ENCODE measurements at regions of chr12 and their contacts with region 1.

Region 1: DNA sequence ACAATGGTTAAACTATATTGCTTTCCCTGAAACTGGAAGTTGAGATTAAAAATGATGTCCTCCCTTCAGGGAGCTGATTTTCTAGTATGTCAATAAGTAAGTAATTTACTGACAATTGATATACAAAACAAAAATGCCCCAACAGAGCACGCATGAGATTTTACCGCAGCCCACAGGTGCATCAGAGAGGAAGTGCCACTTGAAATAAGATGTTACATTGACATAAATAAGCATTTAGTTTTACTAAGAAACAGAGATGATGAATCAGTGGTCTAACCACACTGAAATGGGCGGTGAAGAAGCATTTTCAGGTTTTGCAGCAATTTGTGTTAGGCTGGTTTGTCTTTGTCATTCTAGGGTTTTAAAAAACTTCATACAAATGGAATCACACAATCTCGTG is 8.8 kb upstream of the CLECL1 start:
- DNase-seq: peak; percentile 38 to 94 (median 64)
- ATAC-seq: peak; percentile 65
- H3K4me3 ChIP-seq: no peak overlapping the region
- H3K4me3 Mint-ChIP-seq: peak overlapping the region; percentile 78
- H3K27ac ChIP-seq: peak overlapping the region; percentile 46 to 75
- H3K27ac Mint-ChIP-seq: peak overlapping the region; percentile 91
- H3K4me1 ChIP-seq: peaks cover 37% of the 10 kb centered on the region
- H3K4me1 Mint-ChIP-seq: peaks cover 70% of the 10 kb centered on the region
- H3K27me3 ChIP-seq: no peaks in the 10 kb centered on the region
- H3K27me3 Mint-ChIP-seq: no peaks in the 10 kb centered on the region
- CTCF ChIP-seq: no peak

Region 2: DNA sequence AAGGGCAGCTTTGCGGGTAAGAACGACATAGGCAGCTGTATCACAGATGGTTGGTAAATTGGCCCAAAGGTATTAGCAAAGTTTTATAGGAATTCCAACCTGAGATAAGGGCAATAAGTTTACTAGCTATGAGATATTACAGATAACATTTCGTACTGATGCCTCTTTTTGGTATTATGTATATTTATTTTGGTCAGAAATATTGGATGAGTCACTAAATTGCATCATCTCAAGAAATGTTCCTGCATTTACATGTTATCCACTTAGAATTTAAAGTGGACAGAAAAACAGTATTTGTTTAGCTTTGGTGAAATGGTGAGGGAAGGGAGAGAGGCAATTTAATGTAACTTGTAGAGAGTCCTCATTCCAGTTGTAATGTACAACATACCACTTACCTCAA is 468.4 kb before region 1 on chr12:
- CTCF ChIA-PET with region 1: no interaction called
- POLR2A ChIA-PET with region 1: no interaction called
- intact Hi-C with region 1: no loop called
- DNase-seq: no peak
- ATAC-seq: no peak
- H3K4me3 ChIP-seq: no peak overlapping the region
- H3K4me3 Mint-ChIP-seq: no peak overlapping the region
- H3K27ac ChIP-seq: no peak overlapping the region
- H3K27ac Mint-ChIP-seq: no peak overlapping the region
- H3K4me1 ChIP-seq: no peaks in the 10 kb centered on the region
- H3K4me1 Mint-ChIP-seq: no peaks in the 10 kb centered on the region
- H3K27me3 ChIP-seq: no peaks in the 10 kb centered on the region
- H3K27me3 Mint-ChIP-seq: peaks cover 14% of the 10 kb centered on the region
- CTCF ChIP-seq: no peak

Region 3: GRCh38 chr12:9615420-9616136 is 126.1 kb before region 1 on chr12:
- CTCF ChIA-PET with region 1: interaction called, 7 read pairs
- POLR2A ChIA-PET with region 1: interaction called, 16 read pairs
- intact Hi-C with region 1: no loop called
- DNase-seq: peak in 3 of 14 experiments; percentile 69 to 86 (median 72)
- ATAC-seq: peak; percentile 94
- H3K4me3 ChIP-seq: peak overlapping the region; percentile 39
- H3K4me3 Mint-ChIP-seq: peak overlapping the region; percentile 69
- H3K27ac ChIP-seq: peak overlapping the region; percentile 43 to 89
- H3K27ac Mint-ChIP-seq: peak overlapping the region; percentile 97
- H3K4me1 ChIP-seq: peaks cover 24% of the 10 kb centered on the region
- H3K4me1 Mint-ChIP-seq: peaks cover 90% of the 10 kb centered on the region
- H3K27me3 ChIP-seq: no peaks in the 10 kb centered on the region
- H3K27me3 Mint-ChIP-seq: no peaks in the 10 kb centered on the region
- CTCF ChIP-seq: no peak

Region 4: GRCh38 chr12:9702255-9702654 is 39.5 kb before region 1 on chr12:
- CTCF ChIA-PET with region 1: interaction called, 4 read pairs
- POLR2A ChIA-PET with region 1: interaction called, 52 read pairs
- intact Hi-C with region 1: no loop called
- DNase-seq: peak in 12 of 14 experiments; percentile 28 to 89 (median 50)
- ATAC-seq: peak; percentile 71
- H3K4me3 ChIP-seq: peak overlapping the region; percentile 27
- H3K4me3 Mint-ChIP-seq: peak overlapping the region; percentile 69
- H3K27ac ChIP-seq: peak overlapping the region; percentile 55 to 77
- H3K27ac Mint-ChIP-seq: peak overlapping the region; percentile 90
- H3K4me1 ChIP-seq: peaks cover 24% of the 10 kb centered on the region
- H3K4me1 Mint-ChIP-seq: peaks cover 93% of the 10 kb centered on the region
- H3K27me3 ChIP-seq: no peaks in the 10 kb centered on the region
- H3K27me3 Mint-ChIP-seq: no peaks in the 10 kb centered on the region
- CTCF ChIP-seq: no peak

Region 5: GRCh38 chr12:9797722-9798619 is 56.2 kb after region 1 on chr12:
- CTCF ChIA-PET with region 1: interaction called, 28 read pairs
- POLR2A ChIA-PET with region 1: interaction called, 18 read pairs
- intact Hi-C with region 1: no loop called
- DNase-seq: peak; percentile 40 to 91 (median 56)
- ATAC-seq: peak; percentile 95
- H3K4me3 ChIP-seq: no peak overlapping the region
- H3K4me3 Mint-ChIP-seq: peak overlapping the region; percentile 52
- H3K27ac ChIP-seq: peak overlapping the region in 1 of 2 donors; percentile 42
- H3K27ac Mint-ChIP-seq: peak overlapping the region; percentile 5
- H3K4me1 ChIP-seq: peaks cover 19% of the 10 kb centered on the region
- H3K4me1 Mint-ChIP-seq: peaks cover 51% of the 10 kb centered on the region
- H3K27me3 ChIP-seq: no peaks in the 10 kb centered on the region
- H3K27me3 Mint-ChIP-seq: no peaks in the 10 kb centered on the region
- CTCF ChIP-seq: peak; percentile 91

Region 6: GRCh38 chr12:9827209-9827888 is 85.6 kb after region 1 on chr12 and contains the start of gene KLRF1:
- CTCF ChIA-PET with region 1: no interaction called
- POLR2A ChIA-PET with region 1: no interaction called
- intact Hi-C with region 1: no loop called
- DNase-seq: peak in 1 of 14 experiments; percentile 48
- ATAC-seq: no peak
- H3K4me3 ChIP-seq: no peak within 1 kb of the TSS
- H3K4me3 Mint-ChIP-seq: no peak within 1 kb of the TSS
- H3K27ac ChIP-seq: no peak within 1 kb of the TSS
- H3K27ac Mint-ChIP-seq: no peak within 1 kb of the TSS
- H3K4me1 ChIP-seq: no peaks in the 10 kb centered on the region
- H3K4me1 Mint-ChIP-seq: no peaks in the 10 kb centered on the region
- H3K27me3 ChIP-seq: no peaks in the 10 kb centered on the region
- H3K27me3 Mint-ChIP-seq: no peaks in the 10 kb centered on the region
- CTCF ChIP-seq: no peak
- total RNA-seq, gene KLRF1: 0.44 TPM in 1 of 2 experiments, not detected in the other

Region 7: DNA sequence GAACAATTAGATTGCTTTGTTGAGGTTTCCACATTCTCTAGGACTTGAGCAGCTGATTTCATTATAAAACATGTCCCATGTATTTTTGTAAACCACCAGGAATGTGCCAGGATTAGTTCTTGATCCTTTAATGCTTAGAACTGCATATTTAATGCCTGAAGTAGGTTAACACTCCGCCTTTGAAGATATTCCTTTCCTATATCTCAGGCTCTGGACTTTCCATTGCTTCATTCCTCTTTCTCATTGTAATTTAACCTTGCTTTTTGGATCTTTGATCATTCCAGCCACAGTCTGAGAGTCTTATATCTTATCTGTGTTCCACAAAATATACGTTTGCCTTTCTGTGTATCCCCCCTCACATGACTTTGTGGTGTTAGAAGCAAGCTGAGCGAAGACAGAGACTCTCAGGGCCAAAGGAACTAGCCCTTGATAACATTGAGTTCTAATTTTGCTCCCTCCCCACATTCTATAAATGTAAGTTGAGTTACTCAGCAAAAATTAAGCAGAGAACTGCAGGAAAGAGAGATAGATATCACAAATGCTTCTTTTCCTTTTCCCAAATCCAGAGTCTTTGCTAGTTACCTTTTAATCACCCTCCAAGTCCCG is 259.5 kb after region 1 on chr12:
- CTCF ChIA-PET with region 1: no interaction called
- POLR2A ChIA-PET with region 1: no interaction called
- intact Hi-C with region 1: loop called in 1 of 2 experiments (anchors 5 kb)
- DNase-seq: no peak
- ATAC-seq: no peak
- H3K4me3 ChIP-seq: no peak overlapping the region
- H3K4me3 Mint-ChIP-seq: no peak overlapping the region
- H3K27ac ChIP-seq: no peak overlapping the region
- H3K27ac Mint-ChIP-seq: no peak overlapping the region
- H3K4me1 ChIP-seq: no peaks in the 10 kb centered on the region
- H3K4me1 Mint-ChIP-seq: no peaks in the 10 kb centered on the region
- H3K27me3 ChIP-seq: no peaks in the 10 kb centered on the region
- H3K27me3 Mint-ChIP-seq: peaks cover 5% of the 10 kb centered on the region
- CTCF ChIP-seq: no peak

Region 8: DNA sequence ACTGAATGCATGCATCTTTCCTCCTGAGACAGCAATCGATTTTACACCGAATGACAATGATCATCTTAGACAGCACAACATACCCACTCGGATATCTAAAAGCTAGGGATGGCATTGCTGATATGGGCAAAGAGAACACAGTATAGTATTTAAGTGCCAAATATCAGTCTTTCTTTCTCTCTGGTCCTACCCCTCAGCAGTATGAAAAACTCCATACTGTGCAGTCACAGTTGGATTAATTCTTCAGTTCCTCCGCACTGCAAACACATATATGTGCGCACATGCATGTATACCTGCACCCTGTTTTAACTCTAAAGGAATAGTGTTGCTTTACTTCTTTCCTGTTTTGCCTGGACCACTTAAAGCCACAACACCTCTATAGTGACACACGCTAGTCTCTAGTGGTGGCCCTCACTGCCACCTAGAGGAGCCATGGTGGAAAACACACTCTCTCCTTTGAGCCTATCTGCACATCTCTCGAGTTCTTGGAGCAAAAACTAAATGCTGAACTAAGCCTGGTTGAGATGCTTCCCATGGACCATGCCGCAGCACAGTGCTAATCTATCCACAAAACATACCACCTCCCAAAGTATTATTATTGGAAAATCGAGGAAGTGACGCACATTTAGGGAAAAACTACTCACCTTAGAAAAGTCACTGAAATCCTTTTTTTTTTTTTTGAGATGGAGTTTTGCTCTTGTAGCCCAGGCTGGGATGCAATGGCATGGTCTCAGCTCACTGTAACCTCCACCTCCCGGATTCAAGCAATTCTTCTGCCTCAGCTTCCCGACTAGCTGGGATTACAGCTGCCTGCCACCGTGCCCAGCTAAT is 449.0 kb after region 1 on chr12:
- CTCF ChIA-PET with region 1: no interaction called
- POLR2A ChIA-PET with region 1: no interaction called
- intact Hi-C with region 1: loop called in 1 of 2 experiments (anchors 5 kb)
- DNase-seq: peak; percentile 23 to 75 (median 40)
- ATAC-seq: peak; percentile 100
- H3K4me3 ChIP-seq: no peak overlapping the region
- H3K4me3 Mint-ChIP-seq: no peak overlapping the region
- H3K27ac ChIP-seq: no peak overlapping the region
- H3K27ac Mint-ChIP-seq: no peak overlapping the region
- H3K4me1 ChIP-seq: no peaks in the 10 kb centered on the region
- H3K4me1 Mint-ChIP-seq: peaks cover 6% of the 10 kb centered on the region
- H3K27me3 ChIP-seq: peaks cover 0 to 6% of the 10 kb centered on the region in 2 experiments
- H3K27me3 Mint-ChIP-seq: peaks cover 25% of the 10 kb centered on the region
- CTCF ChIP-seq: peak; percentile 80

Measured in CD4-positive, alpha-beta T cell (primary cell).